ENCODE measurements at regions of chr10 and their contacts with region 1.

Region 1: GRCh38 chr10:112949875-112950507 is at the start of gene TCF7L2:
- DNase-seq: peak; percentile 88 to 92
- ATAC-seq: peak; percentile 71 to 77
- H3K4me3 ChIP-seq: peak within 1 kb of the TSS; percentile 77 to 84 (median 82)
- H3K27ac ChIP-seq: peak within 1 kb of the TSS; percentile 90 to 96 (median 94)
- H3K4me1 ChIP-seq: peaks cover 18 to 32% of the 10 kb centered on the region in 2 donors
- H3K27me3 ChIP-seq: no peaks in the 10 kb centered on the region
- CTCF ChIP-seq: no peak
- POLR2A ChIP-seq: peak; percentile 59 to 83
- total RNA-seq, gene TCF7L2: 4.6 to 5.1 (median 5.0) TPM

Region 2: DNA sequence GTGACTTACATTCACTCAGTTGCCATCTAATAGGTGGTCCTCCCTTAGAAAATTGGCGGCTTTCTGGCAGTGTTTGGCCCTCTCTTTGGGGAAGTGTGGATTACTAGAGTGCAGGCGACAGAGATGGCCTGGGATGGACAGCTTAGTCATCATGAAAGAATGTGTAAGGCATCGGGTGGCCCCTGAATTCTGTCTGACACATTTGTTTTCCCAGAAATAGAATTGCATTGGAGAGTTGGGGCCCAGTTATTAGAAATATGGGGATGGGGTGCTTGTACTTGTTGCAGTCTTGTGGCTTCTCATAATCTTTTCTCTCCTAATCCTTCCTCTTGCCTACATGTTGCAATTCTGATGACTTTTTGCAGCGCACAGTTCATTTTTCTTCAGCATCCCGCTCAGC is 13.8 kb after region 1 on chr10:
- in situ Hi-C with region 1: no loop called
- intact Hi-C with region 1: no loop called
- DNase-seq: no peak
- ATAC-seq: no peak
- H3K4me3 ChIP-seq: no peak overlapping the region
- H3K27ac ChIP-seq: no peak overlapping the region
- H3K4me1 ChIP-seq: peaks cover 31 to 42% of the 10 kb centered on the region in 2 donors
- H3K27me3 ChIP-seq: no peaks in the 10 kb centered on the region
- CTCF ChIP-seq: no peak
- POLR2A ChIP-seq: no peak

Region 3: GRCh38 chr10:113027574-113028455 is 77.8 kb after region 1 on chr10:
- in situ Hi-C with region 1: no loop called
- intact Hi-C with region 1: loop called (anchors 5 kb)
- DNase-seq: no peak
- ATAC-seq: peak; percentile 60 to 63
- H3K4me3 ChIP-seq: peak overlapping the region; percentile 22 to 50 (median 30)
- H3K27ac ChIP-seq: peak overlapping the region; percentile 14 to 51 (median 32)
- H3K4me1 ChIP-seq: peaks cover 31 to 33% of the 10 kb centered on the region in 2 donors
- H3K27me3 ChIP-seq: no peaks in the 10 kb centered on the region
- CTCF ChIP-seq: no peak
- POLR2A ChIP-seq: no peak

Measured in gastrocnemius medialis (tissue), 4 donors.